ENCODE measurements at regions of chrX and their contacts with region 1.

Region 1: DNA sequence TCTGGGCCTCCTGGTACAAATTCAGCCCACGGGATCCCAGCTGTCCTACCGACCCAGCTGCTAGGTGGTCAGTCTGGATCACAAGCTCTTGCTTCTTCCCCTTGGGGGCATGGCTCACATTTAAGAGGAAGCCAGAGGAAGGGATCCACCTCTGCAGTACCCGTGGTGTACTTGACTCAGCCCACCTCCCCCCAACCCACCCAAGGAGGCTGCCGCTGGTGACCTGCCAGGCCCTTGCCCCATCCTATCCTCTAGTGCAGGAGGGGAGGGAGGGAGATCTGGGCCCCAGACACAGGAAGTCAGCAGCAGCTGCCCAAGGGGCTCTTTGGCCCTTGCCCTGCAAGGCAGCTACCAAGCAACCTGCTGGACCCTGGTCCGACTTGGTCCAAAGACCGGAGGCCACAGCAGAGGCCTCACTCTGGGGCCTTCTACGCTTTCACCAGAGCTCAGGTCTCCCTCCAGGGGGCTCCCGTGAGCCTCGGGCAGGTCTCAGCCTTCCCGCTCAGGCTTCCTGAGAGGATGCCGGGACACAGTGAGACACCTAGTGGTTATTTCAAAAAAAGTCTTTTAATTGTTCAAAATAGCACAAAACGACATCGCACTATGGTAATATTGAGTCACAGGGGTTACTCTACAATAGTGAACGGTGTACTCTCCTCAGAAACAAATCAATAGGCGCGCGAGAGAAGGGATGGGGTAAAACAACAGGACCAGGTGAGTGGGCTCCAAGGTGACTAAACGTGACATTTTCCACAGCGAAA is 2.7 kb upstream of the RENBP start:
- DNase-seq: peak; percentile 91
- H3K4me3 ChIP-seq: no peak overlapping the region
- H3K27ac ChIP-seq: no peak overlapping the region
- H3K4me1 ChIP-seq: peaks cover 0 to 2% of the 10 kb centered on the region in 2 experiments; a peak in 1 of 4 replicates
- H3K27me3 ChIP-seq: no peaks in the 10 kb centered on the region
- CTCF ChIP-seq: peak; percentile 96
- EP300 ChIP-seq: no peak
- RAD21 ChIP-seq: peak; percentile 72

Region 2: GRCh38 chrX:153971450-153972367 is 24.5 kb after region 1 on chrX and contains the start of gene HCFC1:
- CTCF ChIA-PET with region 1: interaction called, 179 read pairs
- POLR2A ChIA-PET with region 1: no interaction called
- DNase-seq: peak; percentile 90
- H3K4me3 ChIP-seq: peak within 1 kb of the TSS; percentile 90 to 98
- H3K27ac ChIP-seq: peak within 1 kb of the TSS; percentile 99
- H3K4me1 ChIP-seq: peaks cover 16 to 48% of the 10 kb centered on the region in 2 experiments; a peak in 2 of 4 replicates
- H3K27me3 ChIP-seq: no peaks in the 10 kb centered on the region
- CTCF ChIP-seq: no peak
- EP300 ChIP-seq: no peak; a peak in 1 of 4 replicates
- RAD21 ChIP-seq: no peak
- polyA plus RNA-seq, gene HCFC1: 4.7 and 9.5 TPM in 2 replicates

Region 3: DNA sequence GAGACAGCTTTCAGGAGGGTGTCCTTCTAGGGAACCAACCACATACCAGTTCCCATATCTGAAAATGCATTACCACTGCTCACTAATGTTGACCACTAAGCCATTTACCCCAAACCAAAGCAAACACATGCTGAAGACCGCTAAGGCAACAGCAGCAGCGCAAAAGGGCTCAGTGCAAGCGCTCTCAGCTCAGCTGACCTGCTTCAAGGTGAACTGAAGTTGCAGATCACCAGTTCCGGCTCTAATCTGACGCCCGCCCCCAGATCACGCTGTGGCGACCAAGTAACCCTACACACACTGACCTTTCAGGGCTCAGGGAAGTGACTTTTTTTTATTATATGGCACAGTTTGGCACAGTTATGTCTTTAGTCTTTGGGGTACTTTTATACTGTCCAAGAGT is 144.5 kb after region 1 on chrX:
- CTCF ChIA-PET with region 1: no interaction called
- POLR2A ChIA-PET with region 1: no interaction called
- DNase-seq: no peak
- H3K4me3 ChIP-seq: no peak overlapping the region
- H3K27ac ChIP-seq: no peak overlapping the region
- H3K4me1 ChIP-seq: peaks cover 0 to 17% of the 10 kb centered on the region in 2 experiments; a peak in 3 of 4 replicates
- H3K27me3 ChIP-seq: no peaks in the 10 kb centered on the region; the same call in 1 of the 2 replicates
- CTCF ChIP-seq: no peak
- EP300 ChIP-seq: no peak
- RAD21 ChIP-seq: no peak

Measured in SK-N-SH (cell line).